ENCODE measurements at regions of chr2 and their contacts with region 1.

Region 1: DNA sequence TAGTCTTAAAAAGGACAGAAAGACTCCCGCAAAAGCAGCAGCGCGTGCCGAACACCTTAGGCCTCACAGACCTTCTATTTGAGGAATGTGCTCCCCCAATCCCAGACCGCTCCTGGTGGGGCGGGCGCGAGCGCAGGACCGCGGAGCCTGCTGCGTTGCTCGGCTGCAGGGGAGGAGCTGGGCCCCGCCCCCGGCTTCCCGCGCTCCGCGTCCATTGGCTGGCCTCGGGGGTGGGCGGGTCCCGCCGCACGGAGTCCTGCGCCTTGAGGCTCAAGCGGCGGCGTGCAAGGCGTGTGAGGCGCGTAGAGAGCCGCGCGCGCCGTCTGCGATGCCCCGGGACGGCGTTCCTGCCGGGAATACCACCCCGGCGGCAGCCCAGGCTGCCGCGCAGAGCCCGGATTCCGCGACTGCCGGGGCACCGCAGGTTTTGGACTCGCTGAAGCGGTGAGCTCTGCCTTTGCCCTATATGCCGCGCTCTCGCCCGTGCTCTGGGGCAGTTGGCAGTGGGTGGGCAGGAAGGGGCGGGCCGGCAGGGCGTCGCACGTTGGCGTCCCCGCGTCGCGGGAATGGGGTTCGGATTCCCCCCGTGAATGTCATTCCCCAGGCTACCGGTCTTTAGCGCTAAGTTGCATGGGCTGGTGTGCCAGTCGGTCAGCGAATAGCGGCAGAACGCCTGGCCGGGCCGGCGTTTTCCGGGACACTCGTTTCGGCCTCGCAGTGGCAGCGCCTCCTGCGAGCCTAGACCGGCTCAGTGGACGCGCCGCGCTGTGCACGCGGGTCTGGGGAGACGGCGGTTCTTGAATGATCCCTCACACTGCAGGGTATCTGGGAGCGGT is 49.6 kb upstream of the PAIP2B start:
- DNase-seq: peak; percentile 96
- ATAC-seq: peak; percentile 98

Region 2: GRCh38 chr2:71226965-71227560 is 49.5 kb before region 1 on chr2 and contains the start of gene PAIP2B:
- intact Hi-C with region 1: loop called (anchors 1 kb)
- DNase-seq: peak; percentile 99
- ATAC-seq: peak; percentile 96
- total RNA-seq, gene PAIP2B: 64.9 TPM

Region 3: GRCh38 chr2:71243634-71244304 is 32.8 kb before region 1 on chr2:
- intact Hi-C with region 1: loop called (anchors 5 kb)
- DNase-seq: peak; percentile 71
- ATAC-seq: peak; percentile 91

Region 4: GRCh38 chr2:71331581-71332434 is 55.3 kb after region 1 on chr2 and contains the start of gene ZNF638:
- intact Hi-C with region 1: loop called (anchors 2 kb)
- DNase-seq: peak; percentile 98
- ATAC-seq: peak; percentile 98
- total RNA-seq, gene ZNF638: 91.9 TPM

Measured in Right ventricle myocardium inferior (tissue), 1 donor.